WTC11 (cell line): ENCODE measurements at regions of chr9 and their contacts with region 1.

Region 1: DNA sequence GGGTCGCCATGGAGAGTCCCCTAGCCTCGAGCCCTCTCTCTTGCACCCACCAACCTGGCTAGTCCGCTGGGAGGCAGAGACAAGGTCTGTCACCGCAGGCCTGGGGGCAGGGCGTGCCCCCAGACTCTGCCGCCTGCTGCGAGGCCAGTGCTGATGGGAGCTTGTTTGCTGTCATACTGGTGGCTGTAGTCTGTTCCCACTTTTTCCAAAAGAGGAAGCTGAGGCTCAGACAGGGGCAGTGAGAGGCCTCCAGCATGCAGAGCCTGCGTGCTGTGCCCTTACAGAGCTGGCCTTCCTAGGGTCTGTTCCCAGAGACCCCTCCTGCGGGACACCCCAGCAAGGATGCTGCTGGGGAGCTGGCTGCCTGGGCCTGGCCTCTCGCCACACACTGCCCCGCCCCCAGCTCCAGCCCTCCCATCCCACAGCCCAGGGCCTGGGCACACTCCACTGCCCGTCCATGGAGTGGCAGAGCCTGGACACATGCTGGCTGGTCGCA is 21.0 kb upstream of the SUSD3 start:
- DNase-seq: no peak
- ATAC-seq: no peak
- H3K4me3 Mint-ChIP-seq: no peak overlapping the region
- H3K27ac Mint-ChIP-seq: no peak overlapping the region
- H3K4me1 Mint-ChIP-seq: peaks cover 14% of the 10 kb centered on the region
- H3K27me3 Mint-ChIP-seq: no peaks in the 10 kb centered on the region
- CTCF ChIP-seq: no peak

Region 2: DNA sequence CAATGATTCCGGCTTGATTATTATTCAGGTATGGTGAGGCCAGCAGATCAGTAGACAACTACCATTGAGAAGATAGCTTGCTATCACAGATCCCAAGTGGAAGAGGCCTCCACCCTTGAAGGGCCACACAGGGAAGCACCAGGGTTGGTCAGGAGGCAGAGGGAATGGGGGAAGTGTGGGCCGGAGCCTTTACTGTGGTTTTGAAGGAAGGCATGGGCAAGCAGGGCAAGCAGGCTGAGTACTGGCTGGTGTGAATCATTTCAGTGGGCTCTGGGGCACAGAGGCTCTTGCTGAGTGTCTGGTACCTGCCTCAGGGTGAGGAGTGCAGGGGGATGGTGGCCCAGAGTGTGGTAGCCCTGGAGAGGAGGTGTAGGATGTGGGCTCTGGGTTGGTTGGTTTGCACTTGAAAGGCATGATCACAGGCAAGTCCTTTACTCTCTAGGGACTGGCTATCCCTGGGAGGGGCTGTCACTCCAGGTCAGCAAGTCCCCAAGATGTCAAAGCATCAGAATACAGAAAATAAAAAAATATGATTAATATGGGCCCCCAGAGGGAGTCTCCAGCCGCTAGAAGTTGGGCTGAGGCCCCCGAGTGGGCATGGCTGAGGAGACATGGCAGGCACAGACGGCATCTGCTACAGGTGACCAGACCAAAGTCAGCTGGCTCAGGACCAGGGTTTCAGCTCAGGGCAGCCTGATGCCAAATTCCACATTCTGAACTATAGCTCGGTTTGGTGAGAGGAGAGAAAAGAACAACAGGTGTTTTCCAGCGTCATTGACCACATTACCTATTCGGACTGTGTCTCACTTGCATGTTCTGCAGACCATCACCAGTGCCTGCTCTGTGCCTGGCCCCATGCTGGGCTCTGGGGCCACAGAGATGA is 11.3 kb after region 1 on chr9:
- CTCF ChIA-PET with region 1: interaction called, 12 read pairs
- POLR2A ChIA-PET with region 1: no interaction called
- DNase-seq: no peak
- ATAC-seq: no peak
- H3K4me3 Mint-ChIP-seq: no peak overlapping the region
- H3K27ac Mint-ChIP-seq: no peak overlapping the region
- H3K4me1 Mint-ChIP-seq: peaks cover 10% of the 10 kb centered on the region
- H3K27me3 Mint-ChIP-seq: no peaks in the 10 kb centered on the region; the same call in 1 of the 2 replicates
- CTCF ChIP-seq: no peak